PC-9 (cell line): ENCODE measurements at regions of chr1 and their contacts with region 1.

Region 1: DNA sequence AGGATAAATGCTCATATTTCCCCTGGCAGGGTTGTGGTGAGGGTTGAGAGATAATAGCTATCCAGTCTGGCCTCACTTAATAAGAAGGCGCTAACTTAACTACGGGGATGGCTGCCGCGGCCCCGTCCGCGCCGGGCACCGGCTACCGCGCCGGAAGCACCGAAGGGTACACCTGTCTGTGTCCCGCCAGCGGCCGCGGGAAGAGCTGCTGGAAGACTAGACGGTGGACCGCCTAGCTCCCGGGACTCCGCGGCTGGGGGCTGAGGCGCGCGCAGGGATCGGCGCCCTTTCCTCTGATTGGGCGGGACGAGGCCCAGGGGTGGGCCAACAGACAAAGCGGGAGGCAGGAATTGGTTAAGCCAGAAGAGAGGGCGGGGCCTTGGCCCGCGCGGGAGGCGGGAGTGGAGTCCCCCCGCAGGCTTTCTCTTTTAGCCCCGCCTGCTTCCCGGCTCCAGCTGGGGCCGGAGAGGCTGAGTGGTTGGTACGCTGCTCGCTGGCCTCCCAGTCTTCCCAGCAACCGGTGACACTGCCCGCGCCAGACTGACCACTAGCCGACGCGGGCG is at the start of gene ZNF672:
- DNase-seq: peak; percentile 85 to 98
- H3K4me3 ChIP-seq: peak within 1 kb of the TSS; percentile 83
- H3K27ac ChIP-seq: peak within 1 kb of the TSS; percentile 88
- H3K4me1 ChIP-seq: peaks cover 11% of the 10 kb centered on the region; the same call in 1 of the 2 replicates
- H3K27me3 ChIP-seq: no peaks in the 10 kb centered on the region
- CTCF ChIP-seq: no peak
- total RNA-seq, gene ZNF672: 24.7 and 27.6 TPM in 2 replicates

Region 2: GRCh38 chr1:248858891-248859889 is 21.3 kb after region 1 on chr1 and contains the start of gene ZNF692:
- CTCF ChIA-PET with region 1: interaction called, 17 read pairs
- POLR2A ChIA-PET with region 1: interaction called, 5 read pairs
- intact Hi-C with region 1: loop called (anchors 1 kb)
- DNase-seq: peak; percentile 75 to 95
- H3K4me3 ChIP-seq: peak within 1 kb of the TSS; percentile 75
- H3K27ac ChIP-seq: peak within 1 kb of the TSS; percentile 72
- H3K4me1 ChIP-seq: peaks cover 16% of the 10 kb centered on the region
- H3K27me3 ChIP-seq: no peaks in the 10 kb centered on the region
- CTCF ChIP-seq: no peak
- total RNA-seq, gene ZNF692: 46.6 and 51.7 TPM in 2 replicates

Region 3: GRCh38 chr1:248873409-248873992 is 35.6 kb after region 1 on chr1:
- CTCF ChIA-PET with region 1: no interaction called
- POLR2A ChIA-PET with region 1: interaction called, 5 read pairs
- intact Hi-C with region 1: loop called (anchors 1 kb)
- DNase-seq: peak; percentile 89 to 98
- H3K4me3 ChIP-seq: peak overlapping the region; percentile 75
- H3K27ac ChIP-seq: peak overlapping the region; percentile 83
- H3K4me1 ChIP-seq: peaks cover 10% of the 10 kb centered on the region
- H3K27me3 ChIP-seq: no peaks in the 10 kb centered on the region
- CTCF ChIP-seq: no peak

Region 4: GRCh38 chr1:248914796-248915381 is 77.0 kb after region 1 on chr1:
- CTCF ChIA-PET with region 1: no interaction called
- POLR2A ChIA-PET with region 1: no interaction called
- intact Hi-C with region 1: no loop called
- DNase-seq: no peak
- H3K4me3 ChIP-seq: no peak overlapping the region
- H3K27ac ChIP-seq: no peak overlapping the region
- H3K4me1 ChIP-seq: no peaks in the 10 kb centered on the region
- H3K27me3 ChIP-seq: no peaks in the 10 kb centered on the region
- CTCF ChIP-seq: no peak